GM10248 (cell line): ENCODE measurements at regions of chr3 and their contacts with region 1.

Region 1: DNA sequence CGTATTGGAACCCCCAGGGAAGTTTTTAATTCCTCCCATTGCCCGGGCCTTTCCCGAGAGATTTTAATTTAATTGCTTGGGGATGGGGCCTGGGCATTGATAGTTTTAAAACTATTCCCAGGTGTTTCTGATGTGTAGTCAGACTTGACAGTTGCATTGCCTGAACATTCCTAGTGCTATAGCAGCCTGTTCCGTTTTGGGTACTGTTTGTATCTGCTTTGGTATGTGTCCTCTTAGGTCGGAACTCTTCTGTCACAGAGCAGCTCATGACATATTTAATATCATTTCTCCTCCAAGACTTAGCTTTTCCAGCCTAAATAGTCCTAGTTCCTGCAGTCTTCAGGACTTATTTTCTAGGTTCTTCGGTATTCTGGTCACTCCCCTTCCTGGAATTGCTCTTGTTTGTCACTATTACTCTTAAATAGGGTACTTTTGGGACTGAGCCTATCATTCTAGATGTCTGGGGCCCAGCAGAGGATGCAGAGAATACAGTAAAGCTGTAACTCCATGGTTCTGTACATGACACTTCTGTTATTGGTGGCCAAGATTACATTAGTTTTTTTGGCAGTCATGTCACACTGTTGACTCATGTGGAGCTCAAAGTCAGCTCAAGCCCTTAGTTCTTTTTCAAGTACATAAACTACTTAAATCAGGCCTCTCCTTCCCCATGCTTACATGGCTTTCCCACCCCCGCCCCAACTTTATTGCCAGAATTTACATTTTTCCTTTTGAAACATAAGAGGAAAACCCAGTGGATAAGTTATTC is 81.5 kb downstream of the BBX start:
- DNase-seq: no peak
- CTCF ChIP-seq: no peak

Region 2: GRCh38 chr3:107297597-107297996 is 306.6 kb before region 1 on chr3:
- CTCF ChIA-PET with region 1: no interaction called
- POLR2A ChIA-PET with region 1: no interaction called
- DNase-seq: no peak
- CTCF ChIP-seq: no peak

Region 3: DNA sequence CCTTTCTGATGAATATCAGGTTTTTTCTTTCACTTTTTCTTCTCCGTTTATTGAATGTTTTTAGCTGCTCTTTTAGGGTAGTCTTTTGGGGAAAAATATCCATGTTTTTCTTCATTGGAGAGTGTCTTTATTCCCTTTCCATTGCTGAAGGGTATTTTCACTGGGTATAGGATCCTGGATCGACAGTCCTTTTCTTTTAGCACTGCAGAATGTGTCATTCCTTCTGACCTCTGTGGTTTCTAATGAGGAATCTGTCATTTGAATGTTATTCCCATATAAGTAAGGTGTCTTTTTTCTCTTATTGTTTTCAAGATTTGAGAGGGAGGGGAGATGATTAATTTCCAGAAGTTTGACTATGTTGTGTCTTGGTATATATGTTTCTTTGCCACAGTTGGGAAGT is 15.3 kb after region 1 on chr3:
- CTCF ChIA-PET with region 1: interaction called, 16 read pairs
- POLR2A ChIA-PET with region 1: no interaction called
- DNase-seq: no peak
- CTCF ChIP-seq: no peak

Region 4: DNA sequence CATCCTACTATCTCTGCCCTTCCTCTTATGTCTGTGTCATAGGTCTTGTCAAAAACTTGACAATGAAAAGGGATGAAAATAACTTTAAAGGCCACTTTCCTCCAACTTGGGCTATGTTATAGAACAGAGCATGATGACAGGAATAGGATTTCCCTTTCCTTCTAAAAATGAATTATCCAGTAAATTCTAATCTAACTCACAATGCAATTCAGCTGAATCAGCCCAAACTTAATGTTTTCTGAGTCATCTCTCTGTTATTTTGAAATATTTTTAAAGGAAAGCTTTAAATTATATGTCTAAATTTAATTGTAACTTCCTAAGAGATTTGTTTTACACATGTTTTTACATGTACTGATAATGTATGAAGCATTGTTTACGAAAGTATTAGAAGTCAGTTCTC is 177.0 kb after region 1 on chr3:
- CTCF ChIA-PET with region 1: no interaction called
- POLR2A ChIA-PET with region 1: no interaction called
- DNase-seq: no peak
- CTCF ChIP-seq: no peak

Region 5: DNA sequence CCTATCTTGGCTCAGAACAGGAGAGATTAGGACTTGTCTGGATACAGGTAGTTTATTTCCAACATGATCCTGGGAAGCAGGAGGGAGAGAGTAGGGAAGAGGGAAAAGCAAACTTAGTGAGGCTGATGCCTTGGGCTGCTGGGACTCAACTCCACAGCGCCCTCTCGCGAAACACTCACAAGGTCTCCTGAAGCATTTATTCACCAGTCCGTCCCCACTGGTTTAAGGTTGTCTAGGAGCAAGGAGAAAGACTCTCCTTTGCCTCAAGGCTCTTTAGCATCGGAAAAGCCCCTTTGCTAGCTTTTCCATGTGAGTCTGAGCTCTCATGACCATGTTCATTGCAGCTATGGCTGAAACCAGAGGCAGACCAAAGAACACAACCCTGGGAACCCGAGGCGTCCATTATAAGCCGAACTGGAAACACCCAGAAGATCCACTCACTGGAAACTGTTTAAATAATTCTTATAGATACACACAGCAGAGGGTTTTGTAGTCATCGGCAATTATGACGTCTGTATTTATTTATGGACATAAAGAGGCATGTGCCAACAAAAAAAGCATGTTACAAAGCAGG is 242.1 kb after region 1 on chr3:
- CTCF ChIA-PET with region 1: no interaction called
- POLR2A ChIA-PET with region 1: no interaction called
- DNase-seq: peak; percentile 46
- CTCF ChIP-seq: peak; percentile 59